Activated CD4-positive, alpha-beta T cell treated with anti-CD3 and anti-CD28 coated beads, Interleukin-2, amount 10 ng/mL, durations not matched to agents 24 days and 14 days (primary cell): ENCODE measurements at regions of chr15 and their contacts with region 1.

Region 1: GRCh38 chr15:58227706-58228543 is 89.7 kb downstream of the AQP9 start:
- DNase-seq: peak; percentile 91
- H3K4me3 Mint-ChIP-seq: no peak overlapping the region
- H3K27ac Mint-ChIP-seq: no peak overlapping the region
- H3K4me1 Mint-ChIP-seq: peaks cover 10% of the 10 kb centered on the region
- H3K27me3 Mint-ChIP-seq: peaks cover 11% of the 10 kb centered on the region

Region 2: DNA sequence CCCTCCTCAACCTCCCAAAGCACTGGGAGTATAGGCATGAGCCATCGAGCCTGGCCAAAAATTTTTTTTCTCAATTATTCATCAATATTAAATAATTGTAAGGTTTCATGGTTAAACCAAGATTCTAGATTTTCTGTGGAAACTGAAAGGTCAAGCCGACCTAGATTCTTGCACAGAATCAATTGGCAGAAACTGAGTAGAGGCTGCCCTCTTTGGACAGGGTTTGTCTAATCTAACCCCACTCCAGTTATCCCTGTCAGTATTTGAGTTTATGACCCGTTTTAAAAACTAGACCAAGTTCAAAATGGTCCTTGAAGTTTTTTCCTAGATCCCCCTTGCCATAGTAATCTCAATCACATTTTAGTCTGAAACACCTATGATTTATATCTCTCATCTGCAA is 530.2 kb after region 1 on chr15:
- intact Hi-C with region 1: loop called (anchors 1 kb)
- DNase-seq: no peak
- H3K4me3 Mint-ChIP-seq: no peak overlapping the region
- H3K27ac Mint-ChIP-seq: no peak overlapping the region
- H3K4me1 Mint-ChIP-seq: peaks cover 2% of the 10 kb centered on the region
- H3K27me3 Mint-ChIP-seq: peaks cover 2% of the 10 kb centered on the region